Gastrocnemius medialis (tissue), 4 donors: ENCODE measurements at regions of chr22 and their contacts with region 1.

Region 1: GRCh38 chr22:22884010-22884887 is 3.4 kb upstream of the IGLL5 start:
- DNase-seq: peak in 1 of 2 donors; percentile 20
- ATAC-seq: no peak
- H3K4me3 ChIP-seq: no peak overlapping the region
- H3K27ac ChIP-seq: no peak overlapping the region
- H3K4me1 ChIP-seq: no peaks in the 10 kb centered on the region
- H3K27me3 ChIP-seq: no peaks in the 10 kb centered on the region
- CTCF ChIP-seq: peak in 1 of 5 experiments; percentile 28
- POLR2A ChIP-seq: no peak

Region 2: GRCh38 chr22:22810018-22810427 is 74.2 kb before region 1 on chr22:
- in situ Hi-C with region 1: no loop called
- intact Hi-C with region 1: loop called (anchors 10 kb)
- DNase-seq: no peak
- ATAC-seq: no peak
- H3K4me3 ChIP-seq: no peak overlapping the region
- H3K27ac ChIP-seq: no peak overlapping the region
- H3K4me1 ChIP-seq: no peaks in the 10 kb centered on the region
- H3K27me3 ChIP-seq: peaks cover 0 to 6% (median 0%) of the 10 kb centered on the region in 3 donors
- CTCF ChIP-seq: peak in 3 of 5 experiments; percentile 24 to 46 (median 24)
- POLR2A ChIP-seq: no peak